Endothelial cell of umbilical vein (primary cell): ENCODE measurements at regions of chr12 and their contacts with region 1.

Region 1: DNA sequence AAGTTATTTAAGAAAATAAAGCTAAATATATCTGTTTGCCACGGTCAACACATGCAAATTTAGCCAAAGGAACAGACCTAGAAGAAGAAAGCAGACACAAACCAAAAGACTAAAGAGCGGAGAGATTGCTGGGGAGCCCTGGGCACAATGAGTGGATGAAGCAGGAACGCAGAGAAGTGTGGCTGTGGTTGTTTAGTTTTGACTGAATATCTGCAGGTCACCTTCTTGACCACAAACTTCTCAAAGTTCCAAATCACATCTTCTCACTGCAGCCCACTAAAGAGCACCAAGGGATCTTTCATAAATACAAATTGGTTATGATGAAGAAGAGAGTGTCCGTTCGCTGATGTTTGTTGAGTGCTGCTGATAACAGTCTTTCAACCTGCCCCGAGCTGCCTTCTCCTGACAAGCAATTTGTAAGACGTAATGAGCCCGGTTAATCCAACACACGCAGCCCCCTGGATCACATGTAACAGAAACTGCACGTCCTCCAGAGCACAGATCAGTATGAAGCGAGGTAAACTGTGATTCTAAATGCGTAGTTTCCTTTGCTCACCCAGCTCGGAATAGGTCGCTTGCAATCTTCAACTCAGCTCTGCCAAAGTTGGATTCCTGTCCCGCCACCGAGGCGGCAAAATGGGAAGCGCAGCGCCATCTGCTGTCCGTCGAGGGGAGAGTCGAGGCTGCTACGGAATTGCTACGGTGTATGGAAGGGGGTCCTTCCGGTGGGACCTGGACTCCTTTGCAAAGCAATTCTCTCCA is 120.8 kb downstream of the GXYLT1 start:
- DNase-seq: peak; percentile 81
- H3K4me3 ChIP-seq: peak overlapping the region in 2 of 3 experiments; percentile 31 to 58
- H3K27ac ChIP-seq: peak overlapping the region; percentile 30
- H3K4me1 ChIP-seq: peaks cover 23% of the 10 kb centered on the region
- H3K27me3 ChIP-seq: no peaks in the 10 kb centered on the region
- CTCF ChIP-seq: peak; percentile 93 to 96
- POLR2A ChIP-seq: no peak

Region 2: DNA sequence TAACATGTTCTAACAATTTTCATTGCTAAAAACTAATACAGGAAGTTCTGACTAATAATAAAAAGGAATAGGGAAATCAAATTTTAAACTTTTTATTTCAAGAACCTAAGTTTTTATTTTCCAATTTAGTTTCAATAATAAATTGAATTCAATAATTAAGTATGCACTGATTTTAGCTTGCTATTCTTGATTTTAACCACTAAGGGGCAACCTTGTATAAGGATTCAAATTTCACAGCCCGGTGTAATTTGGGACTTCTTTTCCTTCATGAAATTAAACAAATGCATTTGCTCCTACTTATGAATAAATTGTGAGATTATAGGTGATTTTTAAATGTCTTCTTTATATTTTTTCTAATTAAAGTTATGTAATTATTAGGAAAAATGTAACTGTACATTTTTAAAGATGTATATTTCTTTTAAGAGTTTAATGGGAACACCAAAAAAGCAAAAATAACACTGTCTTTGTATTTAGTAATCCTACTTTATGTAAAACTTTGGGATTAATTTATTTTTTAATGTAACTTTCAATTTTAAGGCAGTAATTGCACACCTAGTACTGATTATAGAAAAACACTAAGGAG is 1077.2 kb before region 1 on chr12:
- CTCF ChIA-PET with region 1: interaction called, 29 read pairs
- POLR2A ChIA-PET with region 1: no interaction called
- dilution Hi-C with region 1: no loop called
- intact Hi-C with region 1: loop called (anchors 1 kb)
- DNase-seq: peak; percentile 55
- H3K4me3 ChIP-seq: no peak overlapping the region
- H3K27ac ChIP-seq: no peak overlapping the region
- H3K4me1 ChIP-seq: no peaks in the 10 kb centered on the region
- H3K27me3 ChIP-seq: no peaks in the 10 kb centered on the region
- CTCF ChIP-seq: peak in 1 of 2 donors; percentile 41
- POLR2A ChIP-seq: no peak

Region 3: DNA sequence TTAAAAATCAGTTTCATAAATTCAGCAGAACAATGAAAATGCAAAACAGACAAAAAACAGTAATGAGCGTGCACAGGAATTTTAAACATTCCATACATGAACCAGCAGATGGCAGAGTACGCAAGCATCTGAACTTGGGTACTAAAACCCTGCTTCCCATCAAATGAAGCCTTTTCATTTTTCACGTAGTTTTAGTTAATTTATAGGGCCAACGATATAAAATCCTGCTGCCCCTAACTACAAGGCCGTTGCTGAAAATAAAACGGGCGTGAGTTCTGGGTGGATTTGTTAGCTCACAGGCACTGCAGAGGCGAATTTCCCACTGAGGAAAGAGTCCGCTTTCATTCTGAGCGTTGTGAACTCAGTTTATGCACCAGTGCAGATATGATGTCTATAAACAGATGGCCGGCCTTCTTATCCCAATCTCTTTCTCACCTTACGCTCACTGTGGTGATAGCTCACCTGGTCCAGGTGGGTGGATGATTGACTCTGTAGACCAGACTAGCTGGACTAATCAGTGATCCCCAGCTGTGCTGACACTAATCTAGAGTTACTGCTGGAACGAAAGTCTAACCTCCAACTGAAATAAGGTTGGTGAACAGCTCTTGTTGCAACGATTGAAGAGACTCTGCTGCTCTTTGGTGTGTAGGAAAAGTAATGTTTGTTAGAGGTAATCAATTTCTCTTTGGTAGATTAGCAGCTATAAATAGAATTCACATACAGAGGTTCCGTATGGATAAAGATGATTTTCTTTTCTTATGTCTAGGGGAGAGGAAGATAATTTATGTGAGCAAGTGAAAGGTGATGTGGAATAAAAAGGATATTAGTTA is 746.6 kb before region 1 on chr12:
- CTCF ChIA-PET with region 1: interaction called, 168 read pairs
- POLR2A ChIA-PET with region 1: no interaction called
- dilution Hi-C with region 1: no loop called
- intact Hi-C with region 1: loop called (anchors 1 kb)
- DNase-seq: peak; percentile 41
- H3K4me3 ChIP-seq: no peak overlapping the region
- H3K27ac ChIP-seq: no peak overlapping the region
- H3K4me1 ChIP-seq: no peaks in the 10 kb centered on the region
- H3K27me3 ChIP-seq: peaks cover 0 to 3% of the 10 kb centered on the region in 2 experiments
- CTCF ChIP-seq: peak; percentile 41 to 46
- POLR2A ChIP-seq: no peak

Region 4: DNA sequence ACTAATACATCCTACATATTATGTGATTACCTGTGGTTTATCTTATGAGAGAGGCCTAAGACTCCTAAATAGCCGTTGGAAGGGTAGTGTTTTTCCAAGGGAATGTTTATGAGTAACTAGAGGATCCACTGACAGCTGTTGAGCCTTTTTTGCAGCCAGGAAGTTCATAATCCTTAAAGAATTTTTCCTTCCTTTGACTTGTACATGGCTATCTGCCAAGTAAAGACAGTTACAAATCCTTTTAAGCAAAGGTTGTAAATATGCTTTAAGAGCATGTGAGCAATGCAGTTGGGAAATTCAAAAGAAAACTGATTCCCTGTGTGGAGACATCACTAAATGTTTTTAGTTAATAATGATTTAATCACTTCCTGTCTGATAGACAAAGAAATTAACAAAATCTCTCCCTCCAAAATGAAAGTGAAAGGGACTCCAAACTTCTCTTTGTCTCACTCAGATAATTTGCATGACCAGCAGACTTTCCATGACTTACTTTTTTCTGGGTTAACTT is 502.0 kb before region 1 on chr12:
- CTCF ChIA-PET with region 1: interaction called, 8 read pairs
- POLR2A ChIA-PET with region 1: no interaction called
- dilution Hi-C with region 1: no loop called
- intact Hi-C with region 1: loop called (anchors 2 kb)
- DNase-seq: peak; percentile 92
- H3K4me3 ChIP-seq: peak overlapping the region in 2 of 3 experiments; percentile 32 to 62
- H3K27ac ChIP-seq: peak overlapping the region; percentile 89
- H3K4me1 ChIP-seq: peaks cover 19% of the 10 kb centered on the region
- H3K27me3 ChIP-seq: no peaks in the 10 kb centered on the region
- CTCF ChIP-seq: no peak
- POLR2A ChIP-seq: no peak

Region 5: DNA sequence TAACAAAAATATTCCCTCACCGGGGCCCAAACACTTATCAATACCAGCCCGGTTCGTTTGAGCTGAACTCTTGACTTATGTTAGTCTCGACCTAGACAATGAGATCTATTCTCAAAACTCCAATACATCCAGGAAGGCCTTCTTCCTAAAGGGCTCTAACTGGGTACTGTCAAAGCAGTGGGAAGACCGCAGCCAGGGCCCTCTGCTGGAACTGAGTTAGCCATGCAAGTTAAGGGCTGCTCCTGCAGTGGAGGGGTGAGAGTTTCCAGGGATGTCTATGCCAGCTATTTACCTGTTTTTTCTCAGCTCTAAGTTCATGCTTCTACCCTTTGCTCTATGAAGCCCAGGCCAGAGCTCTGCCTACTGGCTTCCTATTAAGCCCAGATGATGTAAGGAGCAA is 228.0 kb before region 1 on chr12:
- CTCF ChIA-PET with region 1: interaction called, 22 read pairs
- POLR2A ChIA-PET with region 1: no interaction called
- dilution Hi-C with region 1: no loop called
- intact Hi-C with region 1: loop called (anchors 1 kb)
- DNase-seq: peak; percentile 5
- H3K4me3 ChIP-seq: no peak overlapping the region
- H3K27ac ChIP-seq: no peak overlapping the region
- H3K4me1 ChIP-seq: peaks cover 19% of the 10 kb centered on the region
- H3K27me3 ChIP-seq: no peaks in the 10 kb centered on the region
- CTCF ChIP-seq: peak; percentile 12 to 17
- POLR2A ChIP-seq: no peak

Region 6: DNA sequence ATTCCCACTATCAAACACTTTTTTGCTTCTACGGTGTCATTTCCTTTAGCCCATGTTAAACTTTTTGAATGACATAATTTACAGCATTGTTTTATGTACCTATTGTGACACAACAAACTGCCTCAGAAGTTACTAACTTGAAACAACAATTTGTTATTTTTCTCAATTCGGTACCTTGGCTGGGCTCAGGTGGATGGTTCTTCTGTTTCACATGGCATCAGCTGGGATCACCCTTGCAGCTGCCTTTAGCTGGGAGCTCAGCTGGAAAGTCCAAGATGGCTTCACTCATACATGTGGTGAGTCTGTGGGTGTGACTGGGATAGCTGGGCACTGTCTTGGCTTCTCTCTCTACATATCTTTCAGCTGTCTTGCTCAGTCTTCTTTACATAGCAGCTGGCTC is 35.2 kb before region 1 on chr12:
- CTCF ChIA-PET with region 1: interaction called, 6 read pairs
- POLR2A ChIA-PET with region 1: interaction called, 11 read pairs
- dilution Hi-C with region 1: no loop called
- intact Hi-C with region 1: no loop called
- DNase-seq: no peak
- H3K4me3 ChIP-seq: no peak overlapping the region
- H3K27ac ChIP-seq: no peak overlapping the region
- H3K4me1 ChIP-seq: no peaks in the 10 kb centered on the region
- H3K27me3 ChIP-seq: no peaks in the 10 kb centered on the region
- CTCF ChIP-seq: no peak
- POLR2A ChIP-seq: no peak

Region 7: DNA sequence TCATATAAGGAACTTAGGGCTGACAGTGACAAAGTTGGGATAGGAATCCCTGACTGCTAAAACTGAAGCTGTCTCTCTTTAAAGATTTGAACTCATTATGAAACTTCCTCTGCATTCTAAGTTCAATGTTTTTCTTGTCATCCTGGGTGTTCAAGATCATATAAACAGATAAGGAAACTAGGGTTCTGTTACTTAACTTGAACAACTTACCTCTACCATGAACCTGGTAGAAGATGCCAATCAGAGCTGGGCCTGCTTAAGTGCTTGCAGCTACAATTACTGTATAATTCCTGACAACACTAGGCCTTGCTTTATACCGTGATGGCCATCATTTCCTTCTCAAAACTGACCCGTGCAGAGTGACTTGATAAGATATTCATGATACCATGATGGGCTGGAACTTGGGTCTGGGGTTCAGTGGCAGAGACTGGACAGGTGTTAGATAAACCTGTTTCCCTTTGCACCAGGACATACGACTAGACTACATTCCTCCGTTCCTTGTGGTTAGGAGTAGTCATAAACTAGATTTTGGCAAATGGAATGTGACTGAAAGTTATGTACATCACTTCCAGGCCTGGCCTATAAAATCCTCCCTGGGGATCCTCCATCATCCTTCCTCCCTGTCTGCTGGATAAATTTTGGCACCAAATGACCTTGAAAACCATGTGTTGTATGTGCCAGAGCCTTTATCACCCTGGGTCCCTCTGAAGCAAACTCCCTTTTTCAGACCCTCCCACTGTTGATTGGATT is 737.9 kb after region 1 on chr12:
- CTCF ChIA-PET with region 1: no interaction called
- POLR2A ChIA-PET with region 1: no interaction called
- dilution Hi-C with region 1: no loop called
- intact Hi-C with region 1: no loop called
- DNase-seq: no peak
- H3K4me3 ChIP-seq: no peak overlapping the region
- H3K27ac ChIP-seq: no peak overlapping the region
- H3K4me1 ChIP-seq: no peaks in the 10 kb centered on the region
- H3K27me3 ChIP-seq: no peaks in the 10 kb centered on the region
- CTCF ChIP-seq: no peak
- POLR2A ChIP-seq: no peak

Region 8: DNA sequence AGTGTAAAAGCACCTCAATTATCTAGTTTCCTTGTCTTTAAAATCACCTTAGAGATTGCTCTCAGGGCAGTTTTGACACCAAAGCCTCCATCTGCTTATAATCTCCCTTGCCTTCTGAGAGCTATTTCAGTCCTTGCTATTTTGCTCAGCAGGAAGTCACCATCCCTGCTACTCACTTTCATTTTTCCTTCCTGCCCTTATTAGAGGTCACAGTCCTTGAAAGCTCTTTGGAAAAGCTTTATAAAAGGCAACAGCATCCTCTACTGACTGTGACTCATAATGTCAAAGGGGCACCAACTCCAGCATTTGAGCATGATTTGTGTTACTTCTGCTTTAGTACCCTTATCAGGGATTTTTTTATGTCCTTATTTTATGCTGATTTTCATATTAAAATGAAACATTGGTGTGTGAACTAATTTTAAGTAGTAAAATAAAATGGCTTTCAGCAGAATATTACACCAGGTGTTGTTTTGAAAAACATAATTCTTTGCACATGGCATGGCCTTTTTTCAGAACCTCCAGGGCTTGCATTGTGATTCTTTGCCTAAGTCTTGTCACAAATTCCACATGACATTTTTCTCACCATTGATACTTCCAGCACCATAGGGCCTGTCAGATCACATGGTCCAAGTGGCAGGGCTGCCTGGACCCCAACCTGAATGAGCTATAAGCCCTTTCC is 1315.1 kb after region 1 on chr12:
- CTCF ChIA-PET with region 1: interaction called, 8 read pairs
- POLR2A ChIA-PET with region 1: no interaction called
- dilution Hi-C with region 1: no loop called
- intact Hi-C with region 1: loop called (anchors 1 kb)
- DNase-seq: peak; percentile 86
- H3K4me3 ChIP-seq: no peak overlapping the region
- H3K27ac ChIP-seq: peak overlapping the region; percentile 11
- H3K4me1 ChIP-seq: peaks cover 24% of the 10 kb centered on the region
- H3K27me3 ChIP-seq: no peaks in the 10 kb centered on the region
- CTCF ChIP-seq: peak; percentile 40 to 68
- POLR2A ChIP-seq: no peak